Mammary epithelial cell (primary cell): ENCODE measurements at regions of chr18 and their contacts with region 1.

Region 1: DNA sequence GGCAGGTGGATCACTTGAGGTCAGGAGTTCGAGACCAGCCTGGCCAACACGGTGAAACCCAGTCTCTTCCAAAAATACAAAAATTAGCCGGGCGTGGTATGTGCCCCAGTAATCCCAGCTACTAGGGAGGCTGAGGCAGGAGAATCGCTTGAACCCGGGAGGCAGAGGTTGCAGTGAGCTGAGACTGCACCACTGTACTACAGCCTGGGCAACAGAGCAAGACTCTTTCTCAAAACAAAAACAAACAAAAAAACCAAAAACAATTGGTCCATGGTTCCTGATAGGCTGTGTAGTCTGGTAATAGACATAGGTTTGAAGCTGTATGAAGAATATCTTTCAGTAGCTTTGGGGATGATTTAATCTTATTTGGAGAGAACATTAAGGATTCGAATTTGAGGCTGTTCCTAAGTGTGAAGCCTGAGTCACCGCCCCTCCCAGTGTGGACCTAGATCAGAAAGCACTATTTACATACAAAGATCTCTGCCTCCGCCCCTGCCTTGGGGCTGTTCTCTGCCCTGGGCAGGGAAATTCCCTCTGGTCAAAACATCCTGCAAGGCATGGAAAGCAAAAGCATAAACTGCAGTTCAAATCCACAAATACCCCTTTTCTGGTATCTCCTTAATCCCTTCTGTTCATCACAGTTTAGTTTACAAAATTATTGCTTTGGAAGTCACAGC is 52.8 kb upstream of the PMAIP1 start:
- DNase-seq: peak; percentile 72
- H3K4me3 ChIP-seq: no peak overlapping the region
- H3K27ac ChIP-seq: no peak overlapping the region
- H3K4me1 ChIP-seq: peaks cover 19% of the 10 kb centered on the region
- H3K27me3 ChIP-seq: no peaks in the 10 kb centered on the region
- CTCF ChIP-seq: no peak

Region 2: DNA sequence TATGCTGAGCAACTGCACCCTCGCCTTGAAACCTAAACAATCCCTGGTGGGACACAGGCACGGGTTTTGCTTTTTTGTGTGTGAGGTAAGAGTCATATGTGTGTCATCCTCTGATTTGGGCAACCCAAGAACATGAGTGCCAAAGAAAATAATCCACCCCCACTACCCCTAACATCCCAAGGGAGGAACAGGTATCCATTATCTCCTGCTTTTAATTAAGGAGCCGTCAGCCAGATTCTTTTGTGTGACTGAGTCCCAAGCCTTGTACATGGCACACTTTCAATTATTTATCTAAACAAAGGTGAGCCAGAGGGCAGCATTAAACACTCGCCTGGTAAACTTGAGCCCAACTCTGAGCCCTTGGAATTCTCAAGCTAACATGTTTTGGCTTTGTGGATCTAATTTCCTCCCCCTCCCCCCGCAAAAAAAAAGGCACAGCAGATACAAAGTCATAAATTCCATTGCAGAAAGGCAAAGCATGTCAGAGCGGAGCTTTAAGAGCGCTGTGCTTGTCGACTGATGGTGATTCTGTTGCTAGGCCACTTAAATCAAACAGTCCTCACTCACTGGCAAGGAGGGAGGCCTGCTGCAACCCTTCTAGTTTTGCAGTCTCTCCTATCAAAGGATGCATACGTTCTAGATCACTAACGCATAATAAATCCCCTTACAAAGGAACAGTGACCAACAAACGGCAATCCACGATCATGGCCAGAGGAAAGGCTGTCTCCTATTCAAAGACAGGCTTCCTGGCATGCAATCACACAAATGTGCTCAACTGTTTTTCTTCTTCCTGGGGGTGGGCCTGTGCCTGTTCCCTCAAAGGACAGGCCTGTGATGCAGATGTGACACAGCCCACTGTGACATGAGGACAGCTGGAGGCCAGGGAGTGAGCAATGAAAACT is 344.4 kb before region 1 on chr18:
- CTCF ChIA-PET with region 1: no interaction called
- dilution Hi-C with region 1: no loop called
- in situ Hi-C with region 1: no loop called
- intact Hi-C with region 1: no loop called
- DNase-seq: peak; percentile 84
- H3K4me3 ChIP-seq: no peak overlapping the region
- H3K27ac ChIP-seq: peak overlapping the region; percentile 76
- H3K4me1 ChIP-seq: peaks cover 31% of the 10 kb centered on the region
- H3K27me3 ChIP-seq: no peaks in the 10 kb centered on the region
- CTCF ChIP-seq: no peak

Region 3: GRCh38 chr18:59576541-59577385 is 270.2 kb before region 1 on chr18:
- CTCF ChIA-PET with region 1: interaction called, 15 read pairs
- dilution Hi-C with region 1: no loop called
- in situ Hi-C with region 1: no loop called
- intact Hi-C with region 1: no loop called
- DNase-seq: no peak
- H3K4me3 ChIP-seq: no peak overlapping the region
- H3K27ac ChIP-seq: no peak overlapping the region
- H3K4me1 ChIP-seq: no peaks in the 10 kb centered on the region
- H3K27me3 ChIP-seq: no peaks in the 10 kb centered on the region
- CTCF ChIP-seq: no peak

Region 4: DNA sequence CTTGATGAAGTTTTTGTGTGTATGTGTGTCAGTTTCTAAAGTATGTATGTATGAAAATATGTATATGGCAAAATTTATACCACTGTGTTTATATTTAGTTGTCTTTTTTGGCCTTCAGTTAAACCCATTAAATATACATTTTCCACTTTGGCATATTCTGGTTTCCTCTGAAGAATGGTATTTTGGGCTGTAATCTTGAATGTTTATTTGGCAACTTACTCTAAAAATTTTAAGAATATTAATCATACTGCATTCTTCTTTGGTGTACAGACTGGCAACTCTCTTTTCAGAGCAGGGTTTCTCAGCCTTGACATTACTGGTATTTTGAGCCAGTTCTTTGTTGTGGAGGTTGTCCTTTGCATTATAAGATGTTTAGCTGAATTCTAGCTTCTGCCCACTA is 121.8 kb before region 1 on chr18:
- CTCF ChIA-PET with region 1: no interaction called
- dilution Hi-C with region 1: no loop called
- in situ Hi-C with region 1: no loop called
- intact Hi-C with region 1: no loop called
- DNase-seq: no peak
- H3K4me3 ChIP-seq: no peak overlapping the region
- H3K27ac ChIP-seq: no peak overlapping the region
- H3K4me1 ChIP-seq: peaks cover 5% of the 10 kb centered on the region
- H3K27me3 ChIP-seq: no peaks in the 10 kb centered on the region
- CTCF ChIP-seq: no peak

Region 5: GRCh38 chr18:59941331-59941730 is 94.4 kb after region 1 on chr18:
- CTCF ChIA-PET with region 1: no interaction called
- dilution Hi-C with region 1: no loop called
- in situ Hi-C with region 1: no loop called
- intact Hi-C with region 1: no loop called
- DNase-seq: no peak
- H3K4me3 ChIP-seq: no peak overlapping the region
- H3K27ac ChIP-seq: no peak overlapping the region
- H3K4me1 ChIP-seq: no peaks in the 10 kb centered on the region
- H3K27me3 ChIP-seq: no peaks in the 10 kb centered on the region
- CTCF ChIP-seq: no peak

Region 6: DNA sequence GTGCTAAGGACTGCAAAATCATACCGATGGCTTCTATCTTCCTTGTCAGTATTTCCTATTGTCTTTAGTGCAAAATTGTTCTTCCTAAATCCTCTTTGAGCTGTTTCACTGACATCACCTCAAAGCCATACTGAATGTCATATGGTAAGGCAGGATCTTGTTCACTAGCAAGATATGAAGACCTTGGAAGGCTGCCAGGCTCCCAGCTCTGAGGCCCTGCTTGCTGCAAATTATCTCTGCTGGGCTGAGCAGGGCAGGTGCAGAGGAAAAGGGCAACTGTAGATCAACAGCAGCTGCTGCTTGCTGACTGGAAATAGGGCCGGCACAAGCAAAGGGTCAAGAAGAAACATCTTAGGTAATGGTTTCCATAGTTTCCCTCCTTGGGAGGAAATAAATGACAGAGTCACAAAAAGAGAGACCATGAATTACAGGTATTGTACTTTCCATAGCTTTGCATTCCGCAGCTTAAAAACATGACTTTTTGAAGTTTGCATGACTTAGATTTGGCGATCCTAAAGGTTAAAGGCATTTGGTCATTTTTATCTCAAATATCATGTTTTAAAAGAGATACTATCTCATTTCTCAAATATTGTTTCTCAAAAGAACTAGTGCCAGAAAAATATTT is 111.1 kb after region 1 on chr18:
- CTCF ChIA-PET with region 1: no interaction called
- dilution Hi-C with region 1: no loop called
- in situ Hi-C with region 1: loop called in 1 of 2 experiments (anchors 10 kb)
- intact Hi-C with region 1: no loop called
- DNase-seq: peak; percentile 39
- H3K4me3 ChIP-seq: no peak overlapping the region
- H3K27ac ChIP-seq: no peak overlapping the region
- H3K4me1 ChIP-seq: peaks cover 54% of the 10 kb centered on the region
- H3K27me3 ChIP-seq: no peaks in the 10 kb centered on the region
- CTCF ChIP-seq: no peak